Activated CD4-positive, alpha-beta T cell treated with anti-CD3 and anti-CD28 coated beads for 36 hours (primary cell): ENCODE measurements at regions of chr9 and their contacts with region 1.

Region 1: DNA sequence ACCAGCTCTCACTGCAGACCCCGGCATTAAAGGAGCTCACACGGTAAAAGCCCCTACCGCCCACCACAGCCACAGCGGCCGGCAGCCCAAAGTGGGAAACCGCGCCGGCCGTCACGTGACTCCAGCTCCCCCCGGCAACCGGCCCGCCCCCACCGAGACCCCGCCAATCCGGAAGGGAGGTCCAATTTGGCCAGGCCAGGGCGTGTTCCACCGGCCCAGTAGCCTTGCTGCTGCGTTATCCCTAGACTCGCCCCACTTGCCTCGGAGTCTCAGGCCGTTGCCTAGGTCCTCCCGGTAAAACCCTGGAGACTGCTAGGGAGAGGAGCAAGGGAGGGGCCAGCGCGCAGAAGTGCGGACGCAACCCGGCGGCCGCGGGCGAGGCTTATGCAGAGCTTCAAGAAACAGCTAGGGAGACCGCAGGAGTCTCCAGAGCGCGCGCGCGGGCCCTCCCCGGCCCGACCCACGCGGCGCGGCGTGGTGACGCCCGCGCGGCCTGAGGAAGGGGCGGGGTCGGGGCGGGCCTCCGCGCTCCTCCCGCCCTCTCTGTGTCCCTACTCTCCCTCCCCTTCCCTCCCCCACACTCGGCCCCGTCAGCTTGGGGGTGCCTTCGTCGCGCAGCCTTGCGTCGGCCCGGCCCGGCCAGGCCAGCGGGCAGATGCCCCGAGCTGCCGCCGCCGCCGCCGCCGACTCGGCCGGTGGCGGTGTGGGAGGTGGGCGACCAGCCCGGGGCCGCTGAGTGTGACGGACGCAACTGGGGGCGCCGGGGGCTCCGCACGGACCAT is at the start of gene RIC1:
- DNase-seq: peak; percentile 94
- ATAC-seq: peak; percentile 81
- H3K4me3 Mint-ChIP-seq: peak within 1 kb of the TSS; percentile 96
- H3K27ac Mint-ChIP-seq: peak within 1 kb of the TSS; percentile 99
- H3K4me1 Mint-ChIP-seq: peaks cover 61% of the 10 kb centered on the region
- H3K27me3 Mint-ChIP-seq: no peaks in the 10 kb centered on the region
- total RNA-seq, gene RIC1: 13.6 to 17.1 TPM

Region 2: GRCh38 chr9:4792572-4793458 is 835.9 kb before region 1 on chr9 and contains the start of gene RCL1:
- CTCF ChIA-PET with region 1: no interaction called
- POLR2A ChIA-PET with region 1: interaction called, 3 read pairs
- intact Hi-C with region 1: loop called (anchors 1 to 2 kb)
- DNase-seq: peak; percentile 98
- ATAC-seq: peak; percentile 96
- H3K4me3 Mint-ChIP-seq: peak within 1 kb of the TSS; percentile 97
- H3K27ac Mint-ChIP-seq: peak within 1 kb of the TSS; percentile 89
- H3K4me1 Mint-ChIP-seq: peaks cover 44% of the 10 kb centered on the region
- H3K27me3 Mint-ChIP-seq: no peaks in the 10 kb centered on the region
- total RNA-seq, gene RCL1: 27.0 to 36.4 TPM

Region 3: GRCh38 chr9:5437254-5438216 is 191.2 kb before region 1 on chr9 and contains the start of gene PLGRKT:
- CTCF ChIA-PET with region 1: interaction called, 4 read pairs
- POLR2A ChIA-PET with region 1: interaction called, 4 read pairs
- intact Hi-C with region 1: loop called in 1 of 2 experiments (anchors 1 kb)
- DNase-seq: peak; percentile 95
- ATAC-seq: peak; percentile 90
- H3K4me3 Mint-ChIP-seq: peak within 1 kb of the TSS; percentile 85
- H3K27ac Mint-ChIP-seq: peak within 1 kb of the TSS; percentile 99
- H3K4me1 Mint-ChIP-seq: peaks cover 55% of the 10 kb centered on the region
- H3K27me3 Mint-ChIP-seq: no peaks in the 10 kb centered on the region
- total RNA-seq, gene PLGRKT: 44.0 to 47.9 TPM

Region 4: DNA sequence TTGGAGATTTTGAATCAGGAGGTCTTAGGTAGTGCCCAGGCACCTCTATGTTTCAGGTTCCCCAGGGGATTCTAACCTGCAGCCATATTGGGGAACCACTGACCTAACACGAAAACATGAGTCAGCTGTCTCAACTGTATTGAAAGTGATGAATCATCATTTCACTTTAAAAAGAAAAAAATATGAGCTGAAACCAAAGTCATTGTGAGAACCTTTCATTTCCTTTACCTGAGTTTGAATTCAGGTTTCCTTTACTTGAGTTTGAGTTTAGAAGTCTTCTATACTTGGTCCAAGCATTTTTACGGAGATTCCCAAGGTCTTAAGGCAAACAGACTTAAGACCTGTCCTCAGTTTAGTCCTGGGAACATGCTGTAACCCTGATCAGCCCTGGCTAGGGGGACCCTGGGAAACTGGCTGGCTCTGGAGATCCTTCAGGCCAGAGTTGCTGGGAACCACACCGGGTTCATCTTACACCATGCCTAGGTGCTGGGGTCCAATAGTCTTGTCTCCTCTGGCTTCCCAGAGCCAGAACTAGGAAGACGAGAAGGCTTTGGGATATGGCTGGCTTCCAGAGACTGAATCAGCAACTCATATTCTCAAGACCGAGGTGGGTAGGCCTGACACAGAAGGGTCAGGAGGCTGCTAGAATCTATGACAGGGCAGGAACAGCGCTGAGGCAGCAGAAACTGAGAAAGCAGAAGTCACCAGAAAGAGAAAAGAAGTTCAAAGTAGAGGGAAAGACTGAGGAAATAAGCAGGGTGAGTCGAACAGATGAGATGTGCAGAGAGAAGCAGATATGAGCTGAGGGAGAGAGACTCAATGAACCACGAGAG is 134.8 kb before region 1 on chr9:
- CTCF ChIA-PET with region 1: no interaction called
- POLR2A ChIA-PET with region 1: no interaction called
- intact Hi-C with region 1: loop called in 1 of 2 experiments (anchors 2 kb)
- DNase-seq: peak; percentile 55
- ATAC-seq: peak; percentile 87
- H3K4me3 Mint-ChIP-seq: no peak overlapping the region
- H3K27ac Mint-ChIP-seq: peak overlapping the region; percentile 82
- H3K4me1 Mint-ChIP-seq: peaks cover 19% of the 10 kb centered on the region
- H3K27me3 Mint-ChIP-seq: peaks cover 2% of the 10 kb centered on the region

Region 5: DNA sequence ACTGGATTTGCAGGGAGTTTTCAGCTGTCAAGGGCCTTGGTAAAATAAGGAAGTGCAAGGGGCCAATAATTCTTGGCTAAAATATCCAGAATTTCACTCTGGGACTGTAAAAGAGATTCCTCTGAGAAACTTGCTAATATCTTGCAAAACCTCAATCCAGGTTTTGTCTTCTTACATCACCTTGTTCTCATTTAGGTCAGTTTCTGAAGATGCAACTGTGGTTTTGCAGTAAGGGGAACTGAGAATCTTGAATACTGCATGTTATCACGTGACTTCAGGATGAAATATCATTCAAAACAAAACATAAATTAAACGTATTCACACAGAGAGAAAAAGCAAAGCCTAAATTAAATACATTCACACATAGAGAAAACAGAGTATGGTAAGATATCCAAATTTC is 34.8 kb before region 1 on chr9:
- CTCF ChIA-PET with region 1: no interaction called
- POLR2A ChIA-PET with region 1: no interaction called
- intact Hi-C with region 1: no loop called
- DNase-seq: no peak
- ATAC-seq: no peak
- H3K4me3 Mint-ChIP-seq: no peak overlapping the region
- H3K27ac Mint-ChIP-seq: no peak overlapping the region
- H3K4me1 Mint-ChIP-seq: peaks cover 30% of the 10 kb centered on the region
- H3K27me3 Mint-ChIP-seq: no peaks in the 10 kb centered on the region

Region 6: GRCh38 chr9:5644501-5644900 is 15.8 kb after region 1 on chr9:
- CTCF ChIA-PET with region 1: interaction called, 3 read pairs
- POLR2A ChIA-PET with region 1: no interaction called
- intact Hi-C with region 1: loop called (anchors 1 kb)
- DNase-seq: no peak
- ATAC-seq: peak; percentile 89
- H3K4me3 Mint-ChIP-seq: no peak overlapping the region
- H3K27ac Mint-ChIP-seq: peak overlapping the region; percentile 16
- H3K4me1 Mint-ChIP-seq: peaks cover 34% of the 10 kb centered on the region
- H3K27me3 Mint-ChIP-seq: no peaks in the 10 kb centered on the region

Region 7: DNA sequence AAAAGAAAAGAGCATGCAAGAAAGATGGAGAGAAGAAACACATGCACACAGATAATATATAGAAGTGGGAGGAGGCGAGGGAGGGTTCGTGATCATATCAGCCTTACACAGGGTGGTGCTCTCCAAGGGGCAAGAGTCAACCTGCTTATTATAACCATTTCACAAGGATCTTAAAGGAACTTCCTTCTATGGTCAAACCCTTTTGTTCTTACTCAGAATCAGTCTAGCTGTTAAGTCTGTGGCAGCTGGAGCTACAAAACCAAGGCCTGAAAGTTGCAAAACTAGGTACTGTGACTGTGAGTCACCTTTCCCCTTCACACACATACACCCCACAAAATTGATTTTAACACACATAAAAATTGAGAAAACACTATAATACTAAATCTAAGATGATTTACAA is 222.7 kb after region 1 on chr9:
- CTCF ChIA-PET with region 1: no interaction called
- POLR2A ChIA-PET with region 1: interaction called, 5 read pairs
- intact Hi-C with region 1: loop called in 1 of 2 experiments (anchors 5 kb)
- DNase-seq: peak; percentile 65
- ATAC-seq: peak; percentile 87
- H3K4me3 Mint-ChIP-seq: no peak overlapping the region
- H3K27ac Mint-ChIP-seq: peak overlapping the region; percentile 44
- H3K4me1 Mint-ChIP-seq: peaks cover 42% of the 10 kb centered on the region
- H3K27me3 Mint-ChIP-seq: no peaks in the 10 kb centered on the region

Region 8: DNA sequence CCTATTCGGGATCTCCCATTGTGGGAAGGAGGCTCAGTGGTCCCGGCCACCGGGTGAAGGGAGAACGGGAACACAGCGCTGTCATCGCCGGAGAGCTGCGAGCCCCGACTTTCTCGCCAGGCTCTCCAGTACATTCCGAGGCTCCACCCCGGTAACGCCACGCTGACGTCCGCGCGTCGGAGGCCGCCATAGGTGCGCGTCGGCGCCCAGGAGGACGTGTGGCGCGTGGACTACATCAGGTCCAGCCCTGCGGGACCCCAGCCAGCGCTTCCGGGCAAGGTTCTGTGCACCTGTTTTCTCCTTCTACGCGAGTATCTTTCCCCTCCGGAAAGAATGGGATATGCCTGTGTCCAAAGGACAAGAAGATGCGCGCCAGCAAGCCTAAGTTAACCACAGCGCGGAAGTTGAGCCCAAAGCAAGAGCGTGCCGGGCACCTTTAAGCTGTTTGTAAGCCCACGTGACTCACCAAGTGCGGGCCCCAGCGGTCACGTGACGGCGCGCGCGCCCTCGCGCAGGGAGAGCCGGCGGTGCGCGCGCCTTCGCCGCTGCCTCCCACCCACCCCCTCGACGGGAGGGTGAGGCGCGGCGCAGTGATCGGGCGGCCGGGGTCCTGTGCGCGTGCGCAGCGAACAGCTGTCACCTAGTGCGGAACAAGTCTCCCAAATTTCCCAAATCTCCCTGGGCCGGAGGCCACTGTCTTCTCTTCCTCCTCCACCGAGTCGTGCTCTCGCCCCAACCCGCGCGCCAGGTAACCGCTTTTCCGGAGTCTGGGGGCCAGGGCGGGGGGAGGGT is 1128.9 kb after region 1 on chr9 and contains the start of gene KDM4C:
- CTCF ChIA-PET with region 1: no interaction called
- POLR2A ChIA-PET with region 1: no interaction called
- intact Hi-C with region 1: loop called in 1 of 2 experiments (anchors 2 kb)
- DNase-seq: peak; percentile 97
- ATAC-seq: peak; percentile 84
- H3K4me3 Mint-ChIP-seq: peak within 1 kb of the TSS; percentile 87
- H3K27ac Mint-ChIP-seq: peak within 1 kb of the TSS; percentile 99
- H3K4me1 Mint-ChIP-seq: peaks cover 26% of the 10 kb centered on the region
- H3K27me3 Mint-ChIP-seq: no peaks in the 10 kb centered on the region
- total RNA-seq, gene KDM4C: 31.7 to 33.1 TPM